ENCODE measurements at regions of chr6 and their contacts with region 1.

Region 1: GRCh38 chr6:110389689-110390382 is 25.5 kb downstream of the DDO start:
- DNase-seq: no peak
- ATAC-seq: no peak
- H3K4me3 ChIP-seq: no peak overlapping the region
- H3K27ac ChIP-seq: no peak overlapping the region
- H3K4me1 ChIP-seq: no peaks in the 10 kb centered on the region
- H3K27me3 ChIP-seq: no peaks in the 10 kb centered on the region; the same call in 1 of the 2 replicates
- CTCF ChIP-seq: no peak

Region 2: DNA sequence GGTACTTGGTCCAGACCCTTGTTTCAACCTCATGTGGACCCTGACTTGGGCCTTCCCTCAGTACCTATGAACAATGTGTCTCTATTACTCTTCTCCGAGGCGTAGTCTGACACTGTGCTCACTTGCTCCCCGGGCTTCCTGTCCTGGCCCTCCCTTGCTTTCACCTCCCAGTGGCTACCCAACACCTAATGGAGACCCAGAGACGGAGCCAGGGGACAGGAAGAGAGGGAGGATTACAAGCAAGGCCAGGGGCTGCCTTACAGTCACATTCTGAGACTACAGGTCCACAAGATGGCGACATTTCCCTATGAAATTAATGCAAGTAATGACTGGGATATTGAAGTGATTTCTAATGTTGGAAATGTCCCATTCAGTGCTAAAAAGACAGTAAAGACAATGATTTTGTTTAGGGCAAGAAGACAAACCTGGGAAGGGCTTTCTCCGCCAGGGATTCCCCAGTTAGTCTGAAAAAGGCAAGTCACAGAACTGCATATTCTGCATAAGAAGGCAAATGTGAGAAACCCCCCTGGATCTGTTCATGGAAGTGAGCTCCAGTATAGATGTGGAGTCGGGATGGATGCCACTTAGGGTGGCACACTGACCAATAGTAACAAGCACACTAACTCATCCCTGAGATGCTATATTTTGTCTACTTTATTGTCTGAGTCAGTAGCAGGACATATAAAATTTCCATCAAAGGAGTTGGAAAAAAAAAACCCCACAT is 862.8 kb before region 1 on chr6:
- CTCF ChIA-PET with region 1: no interaction called
- POLR2A ChIA-PET with region 1: no interaction called
- in situ Hi-C with region 1: no loop called
- intact Hi-C with region 1: loop called (anchors 5 kb)
- DNase-seq: peak; percentile 57
- ATAC-seq: peak; percentile 97
- H3K4me3 ChIP-seq: no peak overlapping the region
- H3K27ac ChIP-seq: no peak overlapping the region
- H3K4me1 ChIP-seq: no peaks in the 10 kb centered on the region
- H3K27me3 ChIP-seq: peaks cover 17% of the 10 kb centered on the region
- CTCF ChIP-seq: peak; percentile 87

Region 3: DNA sequence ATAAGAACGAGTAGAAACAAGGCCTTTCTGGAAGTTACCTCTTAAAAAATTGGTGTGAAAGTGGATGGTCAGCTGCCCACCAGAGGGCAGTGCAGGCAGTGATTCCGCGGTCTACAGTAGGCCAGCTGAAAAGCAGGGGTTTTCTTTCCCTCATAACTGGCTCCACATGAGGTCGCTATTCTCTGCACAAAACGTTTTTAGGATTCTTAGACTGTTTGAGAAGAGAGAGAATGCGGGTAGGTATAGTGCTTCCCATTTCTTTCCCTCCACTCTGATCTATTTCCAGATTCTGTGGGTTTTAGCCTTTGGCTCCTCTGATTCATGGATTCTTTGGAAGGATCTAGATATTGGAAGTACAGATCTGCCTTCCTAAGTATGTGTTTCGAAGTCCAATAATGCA is 684.6 kb before region 1 on chr6:
- CTCF ChIA-PET with region 1: interaction called, 4 read pairs
- POLR2A ChIA-PET with region 1: no interaction called
- in situ Hi-C with region 1: no loop called
- intact Hi-C with region 1: loop called (anchors 2 kb)
- DNase-seq: peak; percentile 90
- ATAC-seq: peak; percentile 97
- H3K4me3 ChIP-seq: no peak overlapping the region
- H3K27ac ChIP-seq: no peak overlapping the region
- H3K4me1 ChIP-seq: no peaks in the 10 kb centered on the region
- H3K27me3 ChIP-seq: no peaks in the 10 kb centered on the region
- CTCF ChIP-seq: peak; percentile 100

Region 4: DNA sequence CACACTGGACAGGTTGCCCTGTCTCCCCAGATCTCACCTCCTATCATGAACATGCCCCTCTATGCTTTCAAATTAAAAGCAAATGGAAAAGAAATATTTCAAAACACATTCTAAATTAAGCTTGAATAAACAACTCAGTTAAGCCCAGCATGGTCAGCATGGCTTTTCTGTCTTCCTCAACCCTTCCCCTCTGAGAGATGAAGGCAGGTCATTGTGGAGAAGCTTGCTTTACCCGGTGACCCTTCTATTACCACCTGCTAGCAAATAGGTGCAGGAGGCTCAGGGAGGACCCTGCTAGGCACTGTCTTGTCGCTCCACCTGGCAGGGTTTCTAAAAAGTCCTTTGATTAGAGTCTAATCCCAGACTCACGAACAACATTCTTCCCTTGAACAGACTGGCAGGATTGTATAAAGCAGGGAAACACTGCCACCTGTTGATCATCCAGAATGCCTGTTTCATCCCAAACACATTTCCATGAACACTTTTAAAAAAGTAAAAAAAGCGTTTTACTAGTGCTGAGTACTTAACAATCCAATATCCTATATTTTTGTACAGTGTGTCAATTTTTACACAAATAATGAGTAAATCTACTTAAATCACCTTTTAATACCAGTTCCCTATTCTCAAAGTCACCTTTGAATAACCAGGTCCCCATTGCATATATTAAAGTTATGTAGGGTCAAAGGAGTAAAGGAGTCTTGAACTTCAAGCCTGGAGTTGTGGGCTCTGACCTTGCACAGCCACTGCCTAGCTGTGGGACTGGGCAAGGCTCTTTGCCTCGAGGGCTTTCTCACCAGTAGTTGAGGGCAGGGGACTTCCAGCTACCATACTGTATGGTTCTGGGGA is 336.2 kb before region 1 on chr6:
- CTCF ChIA-PET with region 1: interaction called, 4 read pairs
- POLR2A ChIA-PET with region 1: no interaction called
- in situ Hi-C with region 1: no loop called
- intact Hi-C with region 1: loop called (anchors 5 kb)
- DNase-seq: peak; percentile 28
- ATAC-seq: peak; percentile 80
- H3K4me3 ChIP-seq: no peak overlapping the region
- H3K27ac ChIP-seq: no peak overlapping the region
- H3K4me1 ChIP-seq: no peaks in the 10 kb centered on the region
- H3K27me3 ChIP-seq: peaks cover 65% of the 10 kb centered on the region
- CTCF ChIP-seq: peak; percentile 90

Region 5: DNA sequence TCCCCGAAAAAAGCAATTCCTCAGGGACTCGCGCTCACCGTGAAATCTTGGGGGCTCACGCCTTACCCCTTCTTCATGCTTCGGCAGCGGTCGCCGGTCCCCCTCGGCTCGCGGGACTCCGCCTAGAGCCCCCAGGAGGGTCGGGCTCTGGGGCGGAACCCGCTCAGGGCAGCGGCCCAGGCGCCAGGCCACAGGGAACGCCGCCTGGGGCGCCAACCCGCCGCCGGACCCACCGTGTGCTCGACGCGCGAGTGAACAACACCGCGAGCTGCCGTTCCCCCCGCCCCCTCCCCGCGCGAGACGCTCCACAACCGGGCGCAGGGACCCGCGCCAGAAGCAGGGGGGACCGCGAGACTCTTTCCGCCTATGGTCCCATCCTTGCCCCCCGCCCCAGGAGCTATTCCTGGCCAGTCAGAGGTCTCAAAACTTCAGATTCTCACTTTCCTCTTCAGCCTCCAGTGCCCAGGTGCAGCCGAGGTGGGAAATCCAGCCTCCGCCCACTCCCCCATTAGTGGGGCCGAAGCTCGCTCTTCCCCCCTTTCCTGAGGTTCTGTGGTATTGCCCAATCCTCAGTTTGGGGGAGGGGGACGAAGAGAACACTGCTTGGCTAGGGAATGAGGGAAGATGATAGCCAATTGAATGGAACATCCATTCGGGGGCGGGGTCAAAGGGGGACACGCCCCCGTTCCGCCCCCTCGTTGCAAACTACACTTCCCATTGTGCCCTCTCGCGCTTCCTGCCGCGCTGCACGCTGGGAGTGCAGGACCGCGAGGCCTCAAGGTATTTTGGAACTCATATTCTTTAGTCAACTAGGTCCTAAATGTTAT is 210.2 kb before region 1 on chr6 and contains the start of gene WASF1:
- CTCF ChIA-PET with region 1: interaction called, 7 read pairs
- POLR2A ChIA-PET with region 1: no interaction called
- in situ Hi-C with region 1: no loop called
- intact Hi-C with region 1: loop called (anchors 2 kb)
- DNase-seq: peak; percentile 99
- ATAC-seq: peak; percentile 93
- H3K4me3 ChIP-seq: peak within 1 kb of the TSS; percentile 80 to 90
- H3K27ac ChIP-seq: peak within 1 kb of the TSS; percentile 91
- H3K4me1 ChIP-seq: peaks cover 51% of the 10 kb centered on the region
- H3K27me3 ChIP-seq: no peaks in the 10 kb centered on the region
- CTCF ChIP-seq: no peak
- total RNA-seq, gene WASF1: 63.9 TPM

Region 6: GRCh38 chr6:110421749-110422443 is 32.1 kb after region 1 on chr6:
- CTCF ChIA-PET with region 1: no interaction called
- POLR2A ChIA-PET with region 1: no interaction called
- in situ Hi-C with region 1: no loop called
- intact Hi-C with region 1: no loop called
- DNase-seq: no peak
- ATAC-seq: no peak
- H3K4me3 ChIP-seq: no peak overlapping the region
- H3K27ac ChIP-seq: no peak overlapping the region
- H3K4me1 ChIP-seq: no peaks in the 10 kb centered on the region
- H3K27me3 ChIP-seq: peaks cover 40% of the 10 kb centered on the region
- CTCF ChIP-seq: no peak

Measured in Panc1 (cell line).